BJ (cell line): ENCODE measurements at regions of chr6 and their contacts with region 1.

Region 1: GRCh38 chr6:11613336-11613735 is 75.8 kb downstream of the TMEM170B start:
- DNase-seq: no peak
- H3K4me3 ChIP-seq: no peak overlapping the region
- H3K27me3 ChIP-seq: no peaks in the 10 kb centered on the region
- CTCF ChIP-seq: no peak

Region 2: GRCh38 chr6:12718015-12718414 is 1104.7 kb after region 1 on chr6:
- CTCF ChIA-PET with region 1: no interaction called
- POLR2A ChIA-PET with region 1: interaction called, 12 read pairs
- DNase-seq: peak; percentile 31
- H3K4me3 ChIP-seq: no peak overlapping the region
- H3K27me3 ChIP-seq: no peaks in the 10 kb centered on the region
- CTCF ChIP-seq: no peak